Heart left ventricle (tissue), 16 donors: ENCODE measurements at regions of chr3 and their contacts with region 1.

Region 1: GRCh38 chr3:153284282-153284938 is 122.4 kb downstream of the RAP2B start:
- DNase-seq: peak in 4 of 5 donors; percentile 42 to 72 (median 50)
- ATAC-seq: peak; percentile 75 to 94 (median 90)
- H3K4me3 ChIP-seq: no peak overlapping the region
- H3K27ac ChIP-seq: peak overlapping the region in 8 of 12 donors; percentile 1 to 84 (median 29)
- H3K4me1 ChIP-seq: peaks cover 0 to 45% (median 15%) of the 10 kb centered on the region in 12 donors
- H3K27me3 ChIP-seq: no peaks in the 10 kb centered on the region
- CTCF ChIP-seq: no peak
- POLR2A ChIP-seq: no peak

Region 2: GRCh38 chr3:153038779-153039178 is 245.6 kb before region 1 on chr3:
- intact Hi-C with region 1: loop called in 3 of 10 experiments (anchors 5 to 10 kb)
- DNase-seq: peak in 3 of 5 donors; percentile 16 to 41 (median 37)
- ATAC-seq: peak in 1 of 4 donors; percentile 68
- H3K4me3 ChIP-seq: no peak overlapping the region
- H3K27ac ChIP-seq: peak overlapping the region in 1 of 12 donors; percentile 14
- H3K4me1 ChIP-seq: peaks cover 0 to 8% (median 0%) of the 10 kb centered on the region in 12 donors
- H3K27me3 ChIP-seq: no peaks in the 10 kb centered on the region
- CTCF ChIP-seq: no peak
- POLR2A ChIP-seq: no peak